ENCODE measurements at regions of chr22 and their contacts with region 1.

Region 1: GRCh38 chr22:36470162-36470993 is 11.1 kb downstream of the TXN2 start:
- DNase-seq: peak; percentile 69 to 94
- ATAC-seq: peak; percentile 95 to 99 (median 97)
- H3K4me3 ChIP-seq: no peak overlapping the region
- H3K4me3 Mint-ChIP-seq: no peak overlapping the region
- H3K27ac ChIP-seq: no peak overlapping the region
- H3K27ac Mint-ChIP-seq: peak overlapping the region in 1 of 2 donors; percentile 33
- H3K4me1 ChIP-seq: peaks cover 24% of the 10 kb centered on the region
- H3K4me1 Mint-ChIP-seq: peaks cover 17 to 20% of the 10 kb centered on the region in 2 donors
- H3K27me3 ChIP-seq: no peaks in the 10 kb centered on the region
- H3K27me3 Mint-ChIP-seq: no peaks in the 10 kb centered on the region
- CTCF ChIP-seq: peak; percentile 93

Region 2: DNA sequence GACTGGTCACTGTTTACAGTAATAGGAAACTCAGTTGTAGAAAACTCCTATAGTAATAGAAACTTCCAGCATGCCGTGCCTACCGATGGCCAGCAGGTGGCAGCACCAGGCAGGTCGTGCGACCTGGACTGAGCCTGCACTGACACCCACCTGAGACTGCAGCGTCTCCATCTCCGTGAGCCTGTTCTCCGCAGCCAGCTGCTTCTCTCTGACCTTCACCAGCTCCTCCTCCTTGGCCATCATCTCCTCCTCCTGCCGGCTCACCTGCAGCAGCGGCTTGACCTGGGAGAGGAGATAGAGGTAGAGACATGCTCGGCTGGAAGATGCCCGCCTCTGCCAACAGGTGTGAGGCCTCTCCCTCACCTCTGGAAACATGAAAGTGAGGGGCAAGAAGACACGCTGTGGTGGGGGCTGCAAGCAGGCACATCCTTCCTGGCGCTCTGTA is 169.0 kb before region 1 on chr22:
- intact Hi-C with region 1: loop called (anchors 1 kb)
- DNase-seq: peak; percentile 79 to 92
- ATAC-seq: peak; percentile 88 to 97 (median 92)
- H3K4me3 ChIP-seq: no peak overlapping the region
- H3K4me3 Mint-ChIP-seq: no peak overlapping the region
- H3K27ac ChIP-seq: no peak overlapping the region
- H3K27ac Mint-ChIP-seq: peak overlapping the region in 1 of 2 donors; percentile 64
- H3K4me1 ChIP-seq: peaks cover 7% of the 10 kb centered on the region
- H3K4me1 Mint-ChIP-seq: peaks cover 4 to 14% of the 10 kb centered on the region in 2 donors
- H3K27me3 ChIP-seq: no peaks in the 10 kb centered on the region
- H3K27me3 Mint-ChIP-seq: no peaks in the 10 kb centered on the region
- CTCF ChIP-seq: peak; percentile 95

Region 3: DNA sequence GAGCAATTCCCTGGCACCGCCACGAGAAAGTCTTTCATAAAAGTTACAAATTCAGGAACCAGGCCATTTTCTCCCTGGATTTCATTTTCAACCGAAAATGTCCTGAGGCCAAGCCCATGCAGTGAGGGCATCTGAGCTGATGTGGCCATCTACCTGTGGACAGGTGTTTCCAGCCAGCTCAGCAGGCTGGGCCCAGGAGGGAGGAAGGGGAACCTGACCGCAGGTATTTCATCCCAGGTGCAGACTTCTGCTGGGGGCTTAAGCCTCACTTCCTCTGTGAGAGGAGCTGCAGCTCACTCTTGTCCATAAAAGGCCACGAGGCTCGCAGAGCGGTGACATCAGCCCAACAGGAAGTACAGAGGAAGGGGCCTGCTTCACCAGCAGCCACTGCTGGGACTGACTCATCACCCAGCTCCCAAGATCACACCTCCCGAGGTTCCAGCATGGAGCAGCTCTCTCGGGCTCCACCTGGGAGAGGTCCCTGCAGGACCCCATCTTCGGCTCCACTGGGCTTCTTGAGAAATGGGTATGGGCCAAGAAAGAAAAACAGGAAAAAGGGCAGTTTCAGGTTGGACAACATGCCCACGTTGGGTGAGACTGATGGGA is 139.0 kb before region 1 on chr22:
- intact Hi-C with region 1: loop called (anchors 1 kb)
- DNase-seq: peak; percentile 74 to 91
- ATAC-seq: peak; percentile 59 to 83 (median 73)
- H3K4me3 ChIP-seq: peak overlapping the region; percentile 2
- H3K4me3 Mint-ChIP-seq: peak overlapping the region; percentile 91
- H3K27ac ChIP-seq: peak overlapping the region; percentile 80
- H3K27ac Mint-ChIP-seq: peak overlapping the region; percentile 98 to 100
- H3K4me1 ChIP-seq: peaks cover 91% of the 10 kb centered on the region
- H3K4me1 Mint-ChIP-seq: peaks cover 94 to 95% of the 10 kb centered on the region in 2 donors
- H3K27me3 ChIP-seq: no peaks in the 10 kb centered on the region
- H3K27me3 Mint-ChIP-seq: no peaks in the 10 kb centered on the region
- CTCF ChIP-seq: no peak

Region 4: GRCh38 chr22:36356708-36357694 is 113.4 kb before region 1 on chr22:
- intact Hi-C with region 1: loop called (anchors 1 kb)
- DNase-seq: peak in 1 of 2 donors; percentile 83
- ATAC-seq: peak; percentile 65 to 75 (median 73)
- H3K4me3 ChIP-seq: no peak overlapping the region
- H3K4me3 Mint-ChIP-seq: peak overlapping the region; percentile 64
- H3K27ac ChIP-seq: peak overlapping the region; percentile 38
- H3K27ac Mint-ChIP-seq: peak overlapping the region; percentile 90 to 96
- H3K4me1 ChIP-seq: peaks cover 99% of the 10 kb centered on the region
- H3K4me1 Mint-ChIP-seq: peaks cover 87 to 93% of the 10 kb centered on the region in 2 donors
- H3K27me3 ChIP-seq: no peaks in the 10 kb centered on the region
- H3K27me3 Mint-ChIP-seq: no peaks in the 10 kb centered on the region
- CTCF ChIP-seq: peak; percentile 42